Sciatic nerve (tissue), 2 donors: ENCODE measurements at regions of chr14 and their contacts with region 1.

Region 1: GRCh38 chr14:54566410-54567223 is at the start of gene SAMD4A:
- DNase-seq: peak; percentile 88
- ATAC-seq: peak; percentile 61
- total RNA-seq, gene SAMD4A: 59.2 TPM

Region 2: DNA sequence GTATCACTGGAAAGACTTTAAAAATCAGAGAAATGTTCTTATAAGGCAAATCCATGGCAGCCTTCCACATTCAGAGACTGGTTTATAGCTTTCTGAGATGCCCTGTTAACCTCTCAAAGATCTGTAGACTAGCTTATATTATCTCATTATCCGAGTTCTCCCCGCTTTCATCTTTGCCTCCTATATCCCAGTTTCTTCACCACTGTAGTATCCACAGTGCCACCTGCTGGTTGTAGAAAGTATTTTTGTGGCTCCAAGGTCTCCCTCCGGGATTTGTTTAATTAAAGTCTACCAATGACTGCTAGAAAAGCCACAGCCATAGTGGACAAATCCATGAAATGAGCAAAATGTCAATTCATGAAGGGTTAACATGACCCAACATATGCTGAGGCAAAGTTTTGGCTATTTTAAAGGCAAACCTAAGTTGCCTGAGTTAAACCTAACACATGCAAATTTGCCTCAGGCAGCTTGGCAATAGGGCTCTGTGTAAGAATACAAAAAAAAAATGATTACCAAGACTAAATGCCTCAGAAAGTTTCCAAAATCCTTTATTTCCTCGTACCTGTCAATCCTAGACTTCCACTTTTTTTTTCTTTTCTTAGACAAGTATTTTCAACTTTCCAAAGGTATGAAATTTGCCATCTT is 391.2 kb before region 1 on chr14:
- intact Hi-C with region 1: no loop called
- DNase-seq: peak; percentile 76
- ATAC-seq: peak; percentile 77

Region 3: GRCh38 chr14:54691525-54692283 is 125.1 kb after region 1 on chr14:
- intact Hi-C with region 1: loop called (anchors 2 kb)
- DNase-seq: peak; percentile 89
- ATAC-seq: peak; percentile 84

Region 4: GRCh38 chr14:54773171-54773975 is 206.8 kb after region 1 on chr14:
- intact Hi-C with region 1: loop called (anchors 5 kb)
- DNase-seq: peak; percentile 87
- ATAC-seq: peak; percentile 92

Region 5: DNA sequence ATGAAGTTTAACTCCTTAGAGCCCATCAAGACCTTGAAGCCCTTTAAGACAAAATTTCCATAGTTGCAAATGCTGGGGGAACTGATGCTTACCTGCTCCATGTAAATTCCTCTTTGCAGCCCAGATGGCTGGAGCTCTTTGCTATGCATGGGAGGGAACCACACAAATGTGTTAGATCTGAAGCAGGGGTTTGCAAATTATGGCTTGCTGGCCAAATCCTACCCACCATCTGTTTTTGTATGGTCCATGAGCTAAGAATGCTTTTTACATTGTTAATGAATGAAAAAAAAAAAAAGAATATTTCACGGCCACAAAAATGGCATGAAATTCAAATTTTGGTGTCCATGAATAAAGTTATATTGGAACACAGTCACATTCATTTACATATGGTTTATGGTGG is 261.4 kb after region 1 on chr14:
- intact Hi-C with region 1: no loop called
- DNase-seq: no peak
- ATAC-seq: no peak